Dorsolateral prefrontal cortex (tissue), 120 donors: ENCODE measurements at regions of chr6 and their contacts with region 1.

Region 1: GRCh38 chr6:96022225-96022624 is 6.5 kb downstream of the FUT9 start:
- DNase-seq: no peak
- H3K4me3 ChIP-seq: no peak overlapping the region
- H3K27ac ChIP-seq: no peak overlapping the region
- H3K27me3 ChIP-seq: no peaks in the 10 kb centered on the region
- CTCF ChIP-seq: no peak

Region 2: GRCh38 chr6:96059586-96059985 is 37.4 kb after region 1 on chr6:
- intact Hi-C with region 1: loop called (anchors 5 kb)
- DNase-seq: no peak
- H3K4me3 ChIP-seq: no peak overlapping the region
- H3K27ac ChIP-seq: peak overlapping the region in 36 of 59 donors; percentile 7 to 76 (median 42)
- H3K27me3 ChIP-seq: no peaks in the 10 kb centered on the region
- CTCF ChIP-seq: no peak